Activated CD8-positive, alpha-beta T cell treated with anti-CD3 and anti-CD28 coated beads for 36 hours (primary cell): ENCODE measurements at regions of chr4 and their contacts with region 1.

Region 1: DNA sequence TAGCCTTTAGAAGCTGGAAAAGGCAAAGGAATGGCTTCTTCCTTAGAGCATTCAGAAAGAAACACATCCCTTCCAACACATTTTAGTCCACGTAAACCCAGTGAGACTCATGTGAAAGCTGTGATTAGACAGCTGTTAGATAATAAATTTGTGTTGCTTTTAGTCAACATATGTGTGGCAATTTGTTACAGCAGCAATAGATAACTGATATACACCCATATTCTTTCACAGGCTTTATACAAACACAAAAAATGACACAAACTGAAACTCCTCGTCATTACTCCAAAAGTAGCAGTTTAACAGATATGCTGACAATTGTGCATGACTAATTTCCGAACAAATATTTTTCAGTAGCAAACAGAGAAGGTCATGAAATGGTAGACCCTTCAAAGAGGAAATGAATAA is 65.3 kb downstream of the ANTXR2 start:
- DNase-seq: no peak
- ATAC-seq: peak; percentile 63
- H3K4me3 Mint-ChIP-seq: peak overlapping the region; percentile 7
- H3K27ac Mint-ChIP-seq: peak overlapping the region; percentile 78
- H3K4me1 Mint-ChIP-seq: peaks cover 47% of the 10 kb centered on the region
- H3K27me3 Mint-ChIP-seq: no peaks in the 10 kb centered on the region
- CTCF ChIP-seq: no peak

Region 2: GRCh38 chr4:80022282-80022681 is 14.5 kb after region 1 on chr4:
- CTCF ChIA-PET with region 1: no interaction called
- POLR2A ChIA-PET with region 1: no interaction called
- intact Hi-C with region 1: no loop called
- DNase-seq: no peak
- ATAC-seq: no peak
- H3K4me3 Mint-ChIP-seq: no peak overlapping the region
- H3K27ac Mint-ChIP-seq: no peak overlapping the region
- H3K4me1 Mint-ChIP-seq: peaks cover 2% of the 10 kb centered on the region
- H3K27me3 Mint-ChIP-seq: no peaks in the 10 kb centered on the region
- CTCF ChIP-seq: no peak

Region 3: DNA sequence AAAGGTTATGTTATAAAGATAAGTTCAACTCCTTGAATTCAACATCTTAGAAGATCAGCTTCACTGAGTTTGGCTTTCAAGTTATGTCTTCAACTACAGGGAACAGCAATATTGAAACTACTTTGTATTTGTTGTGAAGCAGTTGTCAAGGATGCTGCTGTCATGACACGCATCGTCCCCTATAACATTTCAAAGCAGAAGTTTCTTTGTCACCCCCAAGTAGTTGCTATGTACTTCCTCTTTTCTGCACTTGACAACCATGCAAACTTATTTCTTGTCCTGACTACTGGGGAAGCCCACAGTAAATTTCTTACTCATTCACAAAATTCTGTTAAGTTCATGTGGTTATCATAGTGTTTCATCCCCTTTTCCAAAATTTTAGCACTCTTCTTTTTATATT is 51.0 kb after region 1 on chr4:
- CTCF ChIA-PET with region 1: no interaction called
- POLR2A ChIA-PET with region 1: no interaction called
- intact Hi-C with region 1: loop called (anchors 5 kb)
- DNase-seq: peak; percentile 71
- ATAC-seq: peak; percentile 92
- H3K4me3 Mint-ChIP-seq: peak overlapping the region; percentile 73
- H3K27ac Mint-ChIP-seq: peak overlapping the region; percentile 94
- H3K4me1 Mint-ChIP-seq: peaks cover 42% of the 10 kb centered on the region
- H3K27me3 Mint-ChIP-seq: no peaks in the 10 kb centered on the region
- CTCF ChIP-seq: no peak

Region 4: GRCh38 chr4:80072744-80073472 is 65.2 kb after region 1 on chr4 and contains the start of gene ANTXR2:
- CTCF ChIA-PET with region 1: no interaction called
- POLR2A ChIA-PET with region 1: interaction called, 3 read pairs
- intact Hi-C with region 1: loop called (anchors 5 kb)
- DNase-seq: peak; percentile 76
- ATAC-seq: peak; percentile 69
- H3K4me3 Mint-ChIP-seq: peak within 1 kb of the TSS; percentile 88
- H3K27ac Mint-ChIP-seq: peak within 1 kb of the TSS; percentile 89
- H3K4me1 Mint-ChIP-seq: peaks cover 73% of the 10 kb centered on the region
- H3K27me3 Mint-ChIP-seq: no peaks in the 10 kb centered on the region
- CTCF ChIP-seq: no peak
- total RNA-seq, gene ANTXR2: 3.0 to 3.6 TPM

Region 5: DNA sequence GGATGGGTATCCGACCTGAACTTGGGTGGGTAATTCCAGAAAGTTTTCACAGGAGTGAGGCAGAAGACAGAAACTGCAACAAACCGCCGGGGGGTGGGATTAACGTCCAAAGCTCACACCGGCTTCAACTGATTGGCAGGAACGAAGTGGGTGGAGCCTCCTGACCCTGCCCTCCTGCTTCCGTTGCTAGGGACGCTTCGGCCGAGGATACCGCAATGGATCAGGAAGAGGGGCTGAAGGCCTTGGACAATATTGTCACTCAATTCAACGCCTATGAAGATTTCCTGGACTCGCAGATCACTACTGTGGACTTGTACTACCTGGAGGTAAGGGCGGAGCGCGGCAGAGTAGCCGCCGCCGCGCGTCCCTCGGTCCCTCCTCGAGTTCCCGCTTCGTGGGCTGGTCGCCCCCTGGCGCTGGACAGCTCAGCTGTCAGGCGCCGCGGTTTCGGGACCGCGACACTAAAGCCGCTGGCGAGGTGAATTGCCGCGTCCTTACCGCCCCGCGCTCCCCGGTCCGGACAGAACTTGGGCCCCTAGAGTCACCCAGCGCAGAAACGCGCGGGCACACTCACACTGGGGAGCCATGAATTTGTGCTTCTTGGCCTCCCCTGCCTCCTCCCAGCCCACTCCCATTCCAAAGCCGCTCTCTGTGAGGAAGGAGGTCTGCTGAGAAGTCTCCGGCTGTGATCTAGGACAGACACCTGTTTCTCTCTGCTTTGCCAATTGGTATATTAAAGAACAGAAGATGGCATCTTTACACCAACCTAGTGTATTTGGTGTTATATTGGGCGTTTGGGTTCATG is 328.0 kb after region 1 on chr4 and contains the start of gene CFAP299:
- CTCF ChIA-PET with region 1: no interaction called
- POLR2A ChIA-PET with region 1: no interaction called
- intact Hi-C with region 1: no loop called
- DNase-seq: peak; percentile 80
- ATAC-seq: peak; percentile 97
- H3K4me3 Mint-ChIP-seq: peak within 1 kb of the TSS; percentile 75
- H3K27ac Mint-ChIP-seq: no peak within 1 kb of the TSS
- H3K4me1 Mint-ChIP-seq: peaks cover 8% of the 10 kb centered on the region
- H3K27me3 Mint-ChIP-seq: peaks cover 14% of the 10 kb centered on the region
- CTCF ChIP-seq: no peak
- total RNA-seq, gene CFAP299: not detected